ENCODE measurements at regions of chr3 and their contacts with region 1.

Region 1: DNA sequence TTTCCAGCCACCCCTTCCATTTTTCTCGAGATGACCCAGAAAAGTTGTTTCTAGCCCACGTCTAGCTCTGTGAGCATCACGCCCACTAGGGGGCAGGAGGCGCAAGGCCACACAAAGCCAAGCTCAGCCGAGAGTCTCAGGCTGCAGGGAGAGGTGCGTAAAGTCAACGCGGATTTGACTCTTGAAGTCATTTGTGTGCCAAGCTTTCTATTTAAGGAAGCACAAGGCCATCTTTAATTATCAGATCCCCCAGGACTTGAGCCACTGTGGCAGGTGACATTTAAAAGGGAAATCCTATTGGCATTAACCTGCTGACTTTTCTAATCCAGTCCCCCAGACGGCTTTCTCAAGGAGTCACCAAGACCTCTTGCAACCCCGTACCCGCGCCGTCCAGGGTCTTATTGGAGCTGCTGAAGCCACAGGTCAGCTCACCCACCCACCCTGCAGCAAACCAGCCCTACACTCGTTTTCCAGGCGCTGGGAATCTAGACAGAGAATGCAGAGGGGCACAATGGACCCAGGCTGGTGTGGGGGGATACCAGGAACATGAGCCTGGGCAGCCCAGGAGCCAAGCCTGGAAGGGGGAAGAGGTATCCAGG is 62.1 kb downstream of the CAPN7 start:
- DNase-seq: peak; percentile 80 to 87
- ATAC-seq: peak; percentile 70 to 86
- H3K4me3 ChIP-seq: no peak overlapping the region
- H3K27ac ChIP-seq: peak overlapping the region in 1 of 2 experiments; percentile 85; a peak in 3 of 6 replicates
- H3K4me1 ChIP-seq: peaks cover 21% of the 10 kb centered on the region
- CTCF ChIP-seq: peak; percentile 94
- EP300 ChIP-seq: no peak
- POLR2A ChIP-seq: no peak
- RAD21 ChIP-seq: peak; percentile 96 to 98

Region 2: GRCh38 chr3:15228147-15228546 is 40.0 kb before region 1 on chr3:
- CTCF ChIA-PET with region 1: interaction called, 12 read pairs
- POLR2A ChIA-PET with region 1: no interaction called
- DNase-seq: no peak
- ATAC-seq: no peak
- H3K4me3 ChIP-seq: no peak overlapping the region
- H3K27ac ChIP-seq: no peak overlapping the region
- H3K4me1 ChIP-seq: peaks cover 8% of the 10 kb centered on the region; the same call in 1 of the 3 replicates
- CTCF ChIP-seq: no peak
- EP300 ChIP-seq: no peak
- POLR2A ChIP-seq: no peak
- RAD21 ChIP-seq: no peak

Region 3: DNA sequence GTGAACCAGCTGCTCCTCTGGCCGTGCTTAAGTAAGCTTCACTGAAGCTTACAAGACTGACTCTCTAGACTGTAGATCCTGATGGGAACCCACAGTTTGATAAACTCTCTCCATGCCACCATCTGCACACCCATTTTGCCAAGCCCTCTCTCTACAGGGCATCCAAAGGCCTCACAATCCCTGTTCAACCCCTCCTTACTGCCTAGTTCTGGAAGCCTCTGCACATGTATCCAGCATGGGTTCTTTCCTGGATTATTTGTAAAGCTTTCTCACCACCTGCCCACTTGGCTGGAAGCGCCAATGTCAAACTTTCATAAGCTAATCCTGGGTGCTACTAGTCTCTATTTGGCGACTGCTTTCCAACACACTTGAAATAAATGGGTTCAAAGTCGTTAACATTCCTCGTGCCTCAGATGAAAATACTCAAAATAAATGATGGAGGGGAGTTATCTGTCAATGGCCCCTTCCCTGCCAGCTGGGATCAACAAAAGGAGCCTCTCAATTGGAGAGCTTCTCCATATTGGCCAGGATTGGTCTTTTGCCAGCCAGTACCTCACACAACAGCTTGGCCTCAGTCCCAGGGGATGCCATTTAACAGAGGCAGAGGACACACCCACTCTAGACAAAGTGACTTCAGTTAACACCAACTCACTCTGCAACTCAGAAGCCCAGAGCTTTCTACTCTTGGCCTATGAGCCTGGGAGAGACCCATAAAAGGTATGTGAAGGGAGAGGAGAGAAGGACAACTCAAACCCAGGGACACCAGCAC is 16.2 kb after region 1 on chr3:
- CTCF ChIA-PET with region 1: interaction called, 121 read pairs
- POLR2A ChIA-PET with region 1: no interaction called
- DNase-seq: no peak
- ATAC-seq: no peak
- H3K4me3 ChIP-seq: no peak overlapping the region
- H3K27ac ChIP-seq: no peak overlapping the region
- H3K4me1 ChIP-seq: peaks cover 4% of the 10 kb centered on the region; the same call in 1 of the 3 replicates
- CTCF ChIP-seq: no peak
- EP300 ChIP-seq: no peak
- POLR2A ChIP-seq: no peak
- RAD21 ChIP-seq: no peak

Region 4: DNA sequence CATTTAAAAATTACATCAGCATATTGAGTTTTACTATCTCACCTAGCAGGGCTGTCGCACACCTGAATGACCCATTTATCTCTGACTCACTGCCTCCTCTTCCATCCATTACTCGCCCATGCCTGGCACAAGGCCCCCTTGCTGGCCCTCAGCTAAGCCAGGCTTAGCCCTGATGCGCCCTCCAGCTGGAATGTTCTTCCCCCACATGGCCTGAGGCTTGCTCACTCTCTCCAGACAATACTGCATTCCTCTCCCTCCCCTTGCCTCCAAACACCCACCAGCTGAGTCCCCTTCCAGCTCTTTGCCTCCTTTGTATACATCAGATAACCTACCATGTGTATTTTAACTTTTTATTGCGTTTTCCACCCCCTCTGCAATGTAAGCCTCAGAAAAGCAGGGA is 57.1 kb after region 1 on chr3:
- CTCF ChIA-PET with region 1: interaction called, 33 read pairs
- POLR2A ChIA-PET with region 1: no interaction called
- DNase-seq: no peak
- ATAC-seq: peak in 1 of 2 experiments; percentile 62; a peak in 3 of 6 replicates
- H3K4me3 ChIP-seq: no peak overlapping the region
- H3K27ac ChIP-seq: 0 out of 6 replicates have a peak overlapping the region, but pooled peaks of 1 of the 2 experiments have one; percentile 15
- H3K4me1 ChIP-seq: peaks cover 18% of the 10 kb centered on the region
- CTCF ChIP-seq: no peak
- EP300 ChIP-seq: no peak
- POLR2A ChIP-seq: no peak
- RAD21 ChIP-seq: no peak

Region 5: DNA sequence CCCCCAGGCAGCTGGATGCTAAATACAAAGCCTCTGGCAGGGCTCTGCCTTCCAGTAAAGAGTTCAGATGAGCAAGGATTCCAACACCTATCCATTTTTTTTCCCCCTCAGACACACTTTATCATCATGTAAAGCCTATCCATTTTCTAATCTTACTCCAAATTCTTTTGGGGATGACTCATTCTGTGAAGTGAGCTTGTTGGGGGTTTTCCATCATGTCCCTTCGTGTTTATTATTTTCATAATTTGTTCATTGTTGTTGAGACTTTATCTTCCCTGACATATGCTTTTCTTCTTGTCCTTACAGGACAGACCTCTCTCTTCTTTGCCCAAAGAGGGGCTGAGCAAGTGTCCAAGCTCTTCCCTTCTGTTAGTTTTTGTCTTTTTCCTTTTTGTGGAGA is 98.9 kb after region 1 on chr3:
- CTCF ChIA-PET with region 1: interaction called, 29 read pairs
- POLR2A ChIA-PET with region 1: no interaction called
- DNase-seq: no peak
- ATAC-seq: no peak
- H3K4me3 ChIP-seq: no peak overlapping the region
- H3K27ac ChIP-seq: no peak overlapping the region
- H3K4me1 ChIP-seq: peaks cover 8% of the 10 kb centered on the region
- CTCF ChIP-seq: no peak
- EP300 ChIP-seq: no peak
- POLR2A ChIP-seq: no peak
- RAD21 ChIP-seq: no peak

Region 6: DNA sequence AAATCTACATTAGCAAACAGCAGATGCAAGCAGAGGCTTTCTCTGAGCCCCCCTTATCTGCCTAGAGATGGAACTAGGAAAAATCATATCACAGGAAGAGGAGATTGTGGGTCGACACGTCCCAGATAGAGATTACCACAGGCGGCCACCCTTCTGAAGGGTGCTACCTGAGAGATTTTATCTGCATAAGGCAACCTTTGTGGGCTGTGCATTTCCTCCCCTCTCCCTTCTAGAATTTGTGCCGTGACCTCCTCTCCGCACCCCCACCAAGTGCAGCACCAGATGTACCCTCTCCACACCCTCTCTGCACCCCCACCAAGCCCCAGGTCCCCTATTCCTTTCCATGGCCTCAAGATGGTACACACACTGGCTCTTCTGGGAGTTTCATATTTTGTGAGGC is 131.8 kb after region 1 on chr3:
- CTCF ChIA-PET with region 1: interaction called, 175 read pairs
- POLR2A ChIA-PET with region 1: interaction called, 5 read pairs
- DNase-seq: no peak
- ATAC-seq: no peak
- H3K4me3 ChIP-seq: no peak overlapping the region
- H3K27ac ChIP-seq: no peak overlapping the region
- H3K4me1 ChIP-seq: no peaks in the 10 kb centered on the region
- CTCF ChIP-seq: no peak
- EP300 ChIP-seq: no peak
- POLR2A ChIP-seq: no peak
- RAD21 ChIP-seq: no peak

Measured in A549 (cell line).